ENCODE measurements at regions of chr14 and their contacts with region 1.

Region 1: DNA sequence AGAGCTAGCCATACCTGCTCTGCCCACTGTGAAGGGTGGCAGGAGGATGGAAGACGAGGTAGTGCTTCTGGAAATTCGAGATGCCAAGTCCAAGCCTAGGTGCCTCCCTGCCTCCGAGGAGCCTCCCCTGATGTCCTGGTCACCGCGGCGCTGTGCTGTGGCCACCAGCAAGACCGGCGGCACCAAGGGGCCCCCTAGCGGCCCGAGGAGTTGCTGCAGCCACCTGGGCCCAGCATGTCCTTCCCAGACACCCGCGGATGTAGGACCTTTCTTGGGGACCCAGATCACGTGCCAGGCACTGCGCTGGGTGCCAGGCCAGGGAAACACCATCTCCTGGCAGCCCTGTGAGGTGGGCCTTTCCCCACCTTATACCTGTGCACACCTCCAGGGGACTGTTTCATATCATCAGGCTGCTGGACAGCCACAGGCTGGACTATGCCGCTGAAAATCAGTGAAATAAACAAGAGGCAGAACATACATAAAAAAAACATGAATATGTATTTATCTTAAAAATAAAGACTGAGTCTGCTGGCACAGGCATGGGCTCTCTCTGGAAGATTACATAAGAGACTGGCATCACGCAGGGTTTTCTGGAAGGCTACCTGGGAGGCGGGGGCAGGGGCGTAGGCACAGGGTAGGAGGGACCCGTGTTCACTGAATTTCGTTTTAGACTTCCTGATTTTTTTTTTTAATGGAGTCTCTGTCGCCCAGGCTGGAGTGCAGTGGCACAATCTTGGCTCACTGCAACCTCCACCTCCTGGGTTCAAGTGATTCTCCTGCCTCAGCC is 15.9 kb upstream of the HHIPL1 start:
- DNase-seq: peak; percentile 88
- H3K4me3 Mint-ChIP-seq: no peak overlapping the region
- H3K27ac Mint-ChIP-seq: no peak overlapping the region
- H3K4me1 Mint-ChIP-seq: no peaks in the 10 kb centered on the region
- H3K27me3 Mint-ChIP-seq: peaks cover 38% of the 10 kb centered on the region
- CTCF ChIP-seq: peak; percentile 91

Region 2: GRCh38 chr14:99441157-99441870 is 187.7 kb before region 1 on chr14:
- CTCF ChIA-PET with region 1: no interaction called
- intact Hi-C with region 1: no loop called
- DNase-seq: no peak
- H3K4me3 Mint-ChIP-seq: no peak overlapping the region
- H3K27ac Mint-ChIP-seq: no peak overlapping the region
- H3K4me1 Mint-ChIP-seq: no peaks in the 10 kb centered on the region
- H3K27me3 Mint-ChIP-seq: no peaks in the 10 kb centered on the region
- CTCF ChIP-seq: no peak

Region 3: DNA sequence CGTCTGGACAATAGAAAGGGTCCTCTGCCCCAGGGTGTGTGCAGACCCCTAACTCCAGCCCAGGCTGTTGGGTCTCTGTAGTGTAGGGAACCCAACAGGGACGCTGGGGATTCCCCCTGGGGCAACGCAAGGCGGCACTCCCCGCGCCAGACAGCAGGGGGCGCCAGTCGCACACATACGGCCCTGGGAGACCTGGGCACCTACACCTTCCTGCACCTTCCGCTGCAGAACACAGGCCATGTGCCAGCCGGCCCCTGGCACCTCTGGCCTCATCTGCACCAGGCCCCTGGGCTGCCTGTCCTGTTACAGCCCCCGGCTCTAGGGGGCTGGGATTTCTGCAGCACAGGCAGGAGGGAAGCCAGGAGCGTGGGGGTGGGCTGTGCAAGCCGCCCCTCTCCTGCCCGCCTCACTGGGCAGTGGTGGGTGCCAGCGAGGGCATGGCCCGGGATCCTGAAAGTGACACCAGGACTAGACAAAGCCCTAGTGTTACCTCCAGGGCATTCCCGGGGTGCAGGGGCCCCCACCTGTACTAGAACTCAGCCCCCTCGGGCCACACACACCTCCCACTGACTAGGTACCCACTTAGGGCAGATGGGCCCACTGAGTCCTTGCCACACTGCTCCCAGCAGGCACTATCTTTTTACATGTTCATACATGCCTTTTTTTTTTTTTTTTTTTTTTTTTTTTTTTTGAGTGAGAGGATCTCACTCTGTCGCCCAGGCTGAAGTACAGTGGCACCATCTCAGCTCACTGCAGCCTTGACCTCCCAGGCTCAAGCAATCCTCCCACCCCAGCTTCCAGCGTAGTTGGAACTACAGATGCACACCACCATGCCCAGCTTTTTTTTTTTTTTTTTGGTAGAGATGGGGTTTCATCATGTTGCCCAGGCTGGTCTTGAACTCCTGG is 110.3 kb before region 1 on chr14:
- CTCF ChIA-PET with region 1: no interaction called
- intact Hi-C with region 1: loop called (anchors 1 kb)
- DNase-seq: peak; percentile 89
- H3K4me3 Mint-ChIP-seq: no peak overlapping the region
- H3K27ac Mint-ChIP-seq: no peak overlapping the region
- H3K4me1 Mint-ChIP-seq: no peaks in the 10 kb centered on the region
- H3K27me3 Mint-ChIP-seq: no peaks in the 10 kb centered on the region
- CTCF ChIP-seq: peak; percentile 93

Region 4: GRCh38 chr14:99718031-99718810 is 89.2 kb after region 1 on chr14:
- CTCF ChIA-PET with region 1: no interaction called
- intact Hi-C with region 1: no loop called
- DNase-seq: no peak
- H3K4me3 Mint-ChIP-seq: no peak overlapping the region
- H3K27ac Mint-ChIP-seq: no peak overlapping the region
- H3K4me1 Mint-ChIP-seq: no peaks in the 10 kb centered on the region
- H3K27me3 Mint-ChIP-seq: peaks cover 77% of the 10 kb centered on the region
- CTCF ChIP-seq: no peak

Region 5: DNA sequence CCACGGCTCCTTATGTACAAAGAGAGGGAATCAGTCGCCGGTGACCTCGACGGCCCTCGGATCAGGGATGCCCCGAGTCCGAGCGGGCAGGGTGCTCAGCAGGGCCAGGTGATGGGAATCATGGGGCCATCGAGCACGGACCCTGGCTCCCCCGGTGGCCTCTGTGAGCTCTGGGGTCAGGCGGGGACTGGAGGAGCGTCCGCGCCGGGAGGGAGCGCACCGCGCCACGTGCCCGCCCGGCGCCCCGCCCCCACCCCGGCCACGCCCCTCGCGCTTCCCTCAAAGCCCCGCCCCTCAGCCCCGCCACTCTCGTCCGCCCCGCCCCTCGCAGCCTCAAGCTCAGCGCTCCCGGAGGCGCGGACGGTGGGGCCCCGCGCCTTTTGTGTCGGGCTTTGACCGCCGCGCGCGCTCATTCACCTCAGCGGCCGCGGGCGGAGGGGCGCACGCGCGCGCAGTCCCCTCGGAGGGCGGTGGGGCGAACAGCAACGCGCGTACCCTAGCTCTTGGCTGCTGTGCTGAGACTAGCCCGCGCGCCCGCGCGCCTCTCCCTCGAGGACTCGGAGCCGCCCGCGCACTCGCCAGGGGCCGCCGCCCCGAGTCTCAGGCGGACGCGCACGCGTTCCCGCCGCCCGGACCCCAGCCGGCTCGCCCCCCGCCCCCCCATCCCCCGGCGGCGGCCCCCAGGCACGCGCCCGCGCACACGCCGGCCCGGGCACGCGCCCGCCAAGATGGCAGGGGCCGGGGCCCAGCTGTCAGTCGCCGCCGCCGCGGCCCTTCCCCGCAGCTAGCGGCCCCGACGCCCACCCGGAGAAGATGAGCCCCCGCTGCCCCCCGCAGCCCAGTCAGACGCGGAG is 342.3 kb after region 1 on chr14:
- CTCF ChIA-PET with region 1: no interaction called
- intact Hi-C with region 1: no loop called
- DNase-seq: peak; percentile 82
- H3K4me3 Mint-ChIP-seq: peak overlapping the region; percentile 59
- H3K27ac Mint-ChIP-seq: no peak overlapping the region
- H3K4me1 Mint-ChIP-seq: peaks cover 22% of the 10 kb centered on the region
- H3K27me3 Mint-ChIP-seq: peaks cover 29% of the 10 kb centered on the region
- CTCF ChIP-seq: no peak

Measured in Calu3 (cell line).